Ovary (tissue), 10 donors: ENCODE measurements at regions of chr17 and their contacts with region 1.

Region 1: GRCh38 chr17:12180644-12181261 is 160.1 kb downstream of the MAP2K4 start:
- DNase-seq: peak in 4 of 5 donors; percentile 25 to 49 (median 38)
- H3K4me3 ChIP-seq: no peak overlapping the region
- H3K27ac ChIP-seq: no peak overlapping the region
- H3K4me1 ChIP-seq: no peaks in the 10 kb centered on the region
- H3K27me3 ChIP-seq: no peaks in the 10 kb centered on the region
- CTCF ChIP-seq: peak; percentile 37 to 69 (median 60)
- EP300 ChIP-seq: no peak
- POLR2A ChIP-seq: no peak

Region 2: DNA sequence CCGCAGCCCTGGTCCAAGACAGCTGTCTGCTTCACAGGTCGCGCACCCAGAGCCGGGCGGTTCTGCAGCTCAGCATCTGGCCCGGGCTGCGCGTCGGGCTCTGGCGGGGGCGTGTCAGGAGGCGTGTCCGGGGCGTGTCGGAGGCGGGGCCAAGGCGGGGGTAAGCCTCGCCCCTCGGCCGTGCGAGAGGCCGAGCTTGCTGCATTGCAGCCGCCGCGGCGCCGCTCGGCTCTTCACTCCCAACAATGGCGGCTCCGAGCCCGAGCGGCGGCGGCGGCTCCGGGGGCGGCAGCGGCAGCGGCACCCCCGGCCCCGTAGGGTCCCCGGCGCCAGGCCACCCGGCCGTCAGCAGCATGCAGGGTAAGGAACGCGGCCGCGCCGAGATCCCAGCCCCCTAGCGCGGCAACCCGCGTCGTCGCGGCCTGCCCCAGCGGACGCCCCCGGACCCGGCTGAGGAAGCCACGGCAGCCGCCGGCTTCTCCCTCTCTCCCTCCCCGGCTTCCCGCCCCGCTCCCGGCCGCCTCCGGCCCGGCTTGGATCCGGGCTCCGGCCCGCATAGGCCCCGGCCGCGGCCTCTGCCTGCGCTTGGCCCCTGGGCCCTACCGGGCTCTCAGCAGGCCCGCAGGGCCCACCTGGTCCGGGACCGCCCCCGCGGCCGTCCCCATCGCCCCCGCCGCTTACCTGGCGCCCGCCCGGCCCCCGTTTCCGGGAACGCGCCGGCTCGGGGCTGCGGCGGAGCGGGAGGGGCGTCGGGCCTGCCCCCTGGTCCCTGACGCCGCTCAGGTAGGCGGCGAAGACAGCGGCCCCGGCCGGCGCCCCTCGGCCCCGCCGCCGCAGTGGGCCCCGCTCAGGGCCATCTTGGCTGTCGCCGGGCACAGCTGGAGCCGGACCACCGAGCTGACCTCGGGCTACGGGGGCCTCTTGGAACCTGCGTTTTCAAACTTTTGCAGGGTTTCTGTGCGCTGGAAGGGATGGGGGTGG is 159.8 kb before region 1 on chr17 and contains the start of gene MAP2K4:
- intact Hi-C with region 1: no loop called
- DNase-seq: peak; percentile 90 to 98 (median 95)
- H3K4me3 ChIP-seq: peak within 1 kb of the TSS; percentile 98
- H3K27ac ChIP-seq: peak within 1 kb of the TSS; percentile 40 to 78
- H3K4me1 ChIP-seq: peaks cover 4% of the 10 kb centered on the region
- H3K27me3 ChIP-seq: no peaks in the 10 kb centered on the region
- CTCF ChIP-seq: no peak
- EP300 ChIP-seq: no peak
- POLR2A ChIP-seq: peak; percentile 68
- total RNA-seq, gene MAP2K4: 29.4 to 66.8 (median 43.5) TPM

Region 3: GRCh38 chr17:12730931-12731521 is 550.3 kb after region 1 on chr17:
- intact Hi-C with region 1: loop called in 1 of 4 experiments (anchors 10 kb)
- DNase-seq: peak in 1 of 5 donors; percentile 22
- H3K4me3 ChIP-seq: no peak overlapping the region
- H3K27ac ChIP-seq: no peak overlapping the region
- H3K4me1 ChIP-seq: peaks cover 13% of the 10 kb centered on the region
- H3K27me3 ChIP-seq: no peaks in the 10 kb centered on the region
- CTCF ChIP-seq: no peak
- EP300 ChIP-seq: no peak
- POLR2A ChIP-seq: no peak